Posterior vena cava (tissue), 2 donors: ENCODE measurements at regions of chr14 and their contacts with region 1.

Region 1: GRCh38 chr14:69972755-69973154 is 93.5 kb downstream of the SMOC1 start:
- DNase-seq: no peak

Region 2: DNA sequence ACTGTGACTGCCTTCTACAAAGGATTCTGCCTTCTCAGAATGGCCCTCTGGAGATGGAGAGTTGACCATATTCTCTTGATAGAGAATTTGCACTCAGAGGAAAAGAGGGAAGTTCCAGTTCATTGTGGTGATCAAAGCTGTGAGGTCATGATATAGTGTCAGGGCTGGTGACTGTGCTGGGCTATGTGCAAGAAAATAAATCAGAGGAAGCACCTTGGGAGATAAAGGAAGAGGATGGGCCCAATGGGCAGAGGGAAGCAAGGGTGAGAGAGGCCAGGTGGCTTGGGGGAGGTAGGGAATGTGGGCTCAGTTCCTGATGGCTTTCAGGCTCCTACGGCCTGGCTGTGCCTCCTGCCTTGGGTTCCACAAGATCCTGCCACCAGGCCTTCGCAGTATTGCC is 70.2 kb after region 1 on chr14:
- intact Hi-C with region 1: loop called in 1 of 2 experiments (anchors 2 kb)
- DNase-seq: no peak